Heart right ventricle (tissue), 16 donors: ENCODE measurements at regions of chr6 and their contacts with region 1.

Region 1: GRCh38 chr6:15608396-15608795 is 54.4 kb downstream of the DTNBP1 start:
- DNase-seq: peak in 1 of 2 donors; percentile 26
- ATAC-seq: peak; percentile 67 to 95 (median 82)
- H3K4me3 ChIP-seq: no peak overlapping the region
- H3K27ac ChIP-seq: peak overlapping the region in 7 of 10 donors; percentile 28 to 55 (median 41)
- H3K4me1 ChIP-seq: peaks cover 0 to 35% (median 10%) of the 10 kb centered on the region in 9 donors
- H3K27me3 ChIP-seq: no peaks in the 10 kb centered on the region
- CTCF ChIP-seq: no peak

Region 2: DNA sequence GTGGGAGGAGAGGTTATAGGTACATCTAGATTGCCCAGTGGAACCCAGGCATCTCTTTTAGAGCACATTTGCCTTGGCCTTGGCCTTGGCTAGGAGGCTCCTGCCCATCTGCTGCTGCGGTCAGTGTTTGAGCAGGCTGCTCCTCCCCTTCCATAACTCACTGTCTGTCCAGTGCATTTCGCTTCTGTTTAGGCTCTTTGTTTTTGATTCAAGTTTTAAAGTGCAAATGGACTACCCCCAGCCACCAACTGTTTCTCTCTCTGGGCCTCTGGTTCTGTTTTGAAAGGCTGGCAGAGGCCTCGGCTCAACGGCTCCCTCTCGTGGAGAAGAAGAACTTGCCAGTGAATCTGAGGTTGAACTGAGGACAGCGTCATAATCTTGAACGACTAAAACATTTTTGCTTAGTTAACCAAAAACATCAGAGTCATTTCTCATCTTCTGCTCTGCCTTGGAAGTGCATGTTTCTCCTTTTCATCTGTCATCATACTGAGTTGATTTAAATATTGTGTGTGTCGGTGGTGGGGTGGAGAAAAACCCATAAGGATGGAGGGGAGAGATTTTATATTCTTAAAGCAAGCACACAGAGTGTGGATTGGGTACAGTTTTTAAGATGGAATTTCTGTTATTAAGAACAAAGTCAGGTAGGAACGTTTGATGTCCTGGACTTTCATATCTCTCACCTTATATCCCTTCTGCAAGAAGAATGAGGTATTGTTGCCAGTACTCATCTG is 117.0 kb before region 1 on chr6:
- intact Hi-C with region 1: loop called in 1 of 10 experiments (anchors 1 kb)
- DNase-seq: peak; percentile 72 to 84
- ATAC-seq: peak in 7 of 8 donors; percentile 55 to 86 (median 78)
- H3K4me3 ChIP-seq: no peak overlapping the region
- H3K27ac ChIP-seq: peak overlapping the region in 5 of 10 donors; percentile 9 to 55 (median 36)
- H3K4me1 ChIP-seq: peaks cover 4 to 43% (median 29%) of the 10 kb centered on the region in 9 donors
- H3K27me3 ChIP-seq: no peaks in the 10 kb centered on the region
- CTCF ChIP-seq: peak; percentile 88 to 98 (median 97)

Region 3: GRCh38 chr6:15948930-15949900 is 340.8 kb after region 1 on chr6:
- intact Hi-C with region 1: no loop called
- DNase-seq: no peak
- ATAC-seq: peak in 1 of 8 donors; percentile 15
- H3K4me3 ChIP-seq: no peak overlapping the region
- H3K27ac ChIP-seq: no peak overlapping the region
- H3K4me1 ChIP-seq: peaks cover 10 to 32% (median 17%) of the 10 kb centered on the region in 9 donors
- H3K27me3 ChIP-seq: no peaks in the 10 kb centered on the region
- CTCF ChIP-seq: no peak